PC-3 (cell line): ENCODE measurements at regions of chr17 and their contacts with region 1.

Region 1: GRCh38 chr17:54947396-54947795 is 21.1 kb downstream of the COX11 start:
- DNase-seq: no peak
- ATAC-seq: no peak
- H3K4me3 ChIP-seq: no peak overlapping the region
- H3K27ac ChIP-seq: peak overlapping the region; percentile 61; the same call in 1 of the 2 replicates
- H3K4me1 ChIP-seq: peaks cover 23% of the 10 kb centered on the region
- H3K27me3 ChIP-seq: no peaks in the 10 kb centered on the region
- CTCF ChIP-seq: no peak

Region 2: DNA sequence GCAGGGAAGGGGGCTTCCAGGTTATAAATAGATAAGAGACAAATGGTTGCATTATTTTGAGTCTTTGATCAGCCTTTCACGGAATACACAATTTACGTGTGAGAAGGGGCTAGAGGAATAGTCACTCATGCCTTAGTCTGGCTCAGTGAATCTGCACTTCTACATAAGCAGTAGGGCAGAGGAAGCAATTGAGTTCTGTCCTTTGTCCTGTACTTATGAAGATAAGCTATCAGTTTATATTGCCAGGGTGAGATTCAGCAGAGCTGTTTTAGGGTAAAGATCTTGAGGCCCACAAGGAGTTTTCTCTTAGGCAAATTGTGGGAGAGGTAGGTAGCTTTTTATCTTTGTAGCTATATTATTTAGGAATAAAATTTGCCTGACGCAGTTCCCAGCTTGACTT is 13.5 kb before region 1 on chr17:
- CTCF ChIA-PET with region 1: no interaction called
- POLR2A ChIA-PET with region 1: interaction called, 6 read pairs
- intact Hi-C with region 1: loop called (anchors 1 kb)
- DNase-seq: no peak
- ATAC-seq: no peak
- H3K4me3 ChIP-seq: no peak overlapping the region
- H3K27ac ChIP-seq: no peak overlapping the region
- H3K4me1 ChIP-seq: peaks cover 13% of the 10 kb centered on the region
- H3K27me3 ChIP-seq: no peaks in the 10 kb centered on the region
- CTCF ChIP-seq: no peak

Region 3: DNA sequence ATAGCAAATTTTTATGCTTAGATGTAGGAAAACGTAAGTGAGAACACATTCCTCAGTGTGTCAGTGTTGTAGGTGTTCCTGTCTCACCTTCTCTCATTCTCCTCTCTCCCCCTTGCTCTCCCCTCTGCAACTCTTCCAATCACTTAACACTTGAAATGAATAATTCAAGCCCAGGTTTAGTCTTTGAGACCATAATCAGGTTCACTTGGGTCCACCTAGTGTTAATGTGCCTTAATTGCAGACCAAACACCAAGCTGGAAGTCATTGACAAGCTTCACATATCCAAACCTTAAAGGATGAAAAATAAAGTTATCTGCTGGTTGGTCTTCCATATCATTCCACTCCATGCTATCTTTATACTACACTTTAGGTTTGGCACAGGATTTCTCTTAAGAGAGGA is 58.1 kb after region 1 on chr17:
- CTCF ChIA-PET with region 1: no interaction called
- POLR2A ChIA-PET with region 1: no interaction called
- intact Hi-C with region 1: no loop called
- DNase-seq: peak; percentile 69
- ATAC-seq: peak; percentile 81
- H3K4me3 ChIP-seq: no peak overlapping the region
- H3K27ac ChIP-seq: no peak overlapping the region
- H3K4me1 ChIP-seq: no peaks in the 10 kb centered on the region
- H3K27me3 ChIP-seq: no peaks in the 10 kb centered on the region
- CTCF ChIP-seq: peak; percentile 74